Testis (tissue), 5 donors: ENCODE measurements at regions of chr5 and their contacts with region 1.

Region 1: GRCh38 chr5:18314192-18314778 is 680.0 kb downstream of the TAF11L14 start:
- DNase-seq: peak; percentile 25
- H3K4me3 ChIP-seq: no peak overlapping the region
- H3K27ac ChIP-seq: no peak overlapping the region
- H3K4me1 ChIP-seq: no peaks in the 10 kb centered on the region
- H3K27me3 ChIP-seq: no peaks in the 10 kb centered on the region
- CTCF ChIP-seq: peak in 2 of 3 experiments; percentile 10 to 91
- POLR2A ChIP-seq: no peak

Region 2: GRCh38 chr5:17216176-17216973 is 1097.9 kb before region 1 on chr5:
- intact Hi-C with region 1: loop called (anchors 10 kb)
- DNase-seq: peak; percentile 78
- H3K4me3 ChIP-seq: peak overlapping the region in 1 of 2 donors; percentile 39
- H3K27ac ChIP-seq: no peak overlapping the region
- H3K4me1 ChIP-seq: peaks cover 5% of the 10 kb centered on the region
- H3K27me3 ChIP-seq: no peaks in the 10 kb centered on the region
- CTCF ChIP-seq: peak; percentile 45 to 63 (median 52)
- POLR2A ChIP-seq: no peak

Region 3: GRCh38 chr5:18465833-18466591 is 151.7 kb after region 1 on chr5:
- intact Hi-C with region 1: no loop called
- DNase-seq: peak; percentile 91
- H3K4me3 ChIP-seq: no peak overlapping the region
- H3K27ac ChIP-seq: no peak overlapping the region
- H3K4me1 ChIP-seq: no peaks in the 10 kb centered on the region
- H3K27me3 ChIP-seq: no peaks in the 10 kb centered on the region
- CTCF ChIP-seq: peak; percentile 37 to 60 (median 47)
- POLR2A ChIP-seq: no peak

Region 4: DNA sequence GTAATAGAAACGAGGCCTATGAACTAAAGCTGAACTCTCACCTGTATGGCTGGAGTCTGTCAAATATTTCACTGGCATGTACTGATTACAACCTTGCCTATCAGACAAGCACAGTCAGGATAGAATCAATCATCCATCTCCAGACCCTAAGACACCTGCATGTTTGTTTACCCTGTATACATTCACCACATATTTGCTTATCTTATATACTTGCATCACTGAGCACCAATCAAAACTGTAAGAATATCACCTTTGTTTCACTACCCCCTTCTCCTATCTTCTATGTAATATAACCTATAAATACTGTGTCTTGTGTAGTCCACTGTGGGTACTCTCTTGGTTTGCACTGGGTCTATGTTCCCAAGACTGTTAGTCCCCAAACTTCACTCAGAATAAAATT is 405.7 kb after region 1 on chr5:
- intact Hi-C with region 1: no loop called
- DNase-seq: no peak
- H3K4me3 ChIP-seq: no peak overlapping the region
- H3K27ac ChIP-seq: no peak overlapping the region
- H3K4me1 ChIP-seq: no peaks in the 10 kb centered on the region
- H3K27me3 ChIP-seq: no peaks in the 10 kb centered on the region
- CTCF ChIP-seq: no peak
- POLR2A ChIP-seq: no peak